Esophagus muscularis mucosa (tissue), 4 donors: ENCODE measurements at regions of chr19 and their contacts with region 1.

Region 1: DNA sequence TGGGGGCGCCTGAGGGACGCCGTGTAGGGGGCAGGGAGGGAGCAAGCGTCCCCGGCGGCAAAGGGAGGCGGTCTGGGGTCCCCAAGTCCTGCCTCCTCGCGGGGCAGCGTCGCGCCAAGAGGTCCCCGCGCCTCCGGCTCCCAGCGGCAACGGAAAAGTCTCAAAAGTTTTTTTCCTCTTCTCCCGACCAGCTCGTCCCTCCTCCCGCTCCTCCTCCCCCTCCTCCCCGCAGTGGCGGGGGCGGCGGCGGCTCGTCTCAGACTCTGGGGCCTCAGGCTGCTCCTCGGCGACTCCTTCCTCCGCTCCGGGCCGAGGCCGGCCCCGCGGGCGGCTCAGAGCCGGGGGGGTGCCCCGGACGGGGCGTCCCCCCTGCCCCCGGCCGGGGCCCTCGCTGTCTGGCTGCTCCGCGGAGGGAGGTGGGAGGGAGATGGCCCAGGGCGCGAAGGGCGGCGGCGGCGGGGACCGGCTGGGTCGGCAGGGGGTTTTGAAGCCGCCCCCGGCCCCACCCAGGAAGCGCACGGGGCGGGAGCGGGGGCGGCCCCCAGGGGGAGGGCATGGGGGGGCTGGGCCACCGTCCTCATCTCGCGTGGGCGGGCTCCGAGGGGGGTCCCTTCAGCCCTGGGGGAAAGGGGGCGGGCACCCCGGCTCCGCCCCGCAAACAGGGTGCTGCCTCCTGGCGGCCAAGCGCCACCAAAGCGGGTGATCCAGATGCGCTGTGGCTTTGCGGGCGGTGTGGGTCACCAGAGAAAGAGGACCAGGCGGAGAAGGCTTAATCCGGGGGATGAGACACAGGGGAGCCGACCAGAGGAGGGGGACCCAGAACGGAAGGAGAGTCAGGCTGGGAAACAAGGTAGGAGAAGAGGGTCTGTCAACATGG is at the start of gene TGFB1:
- DNase-seq: peak; percentile 96
- H3K4me3 ChIP-seq: peak within 1 kb of the TSS; percentile 80 to 90 (median 88)
- H3K27ac ChIP-seq: peak within 1 kb of the TSS; percentile 87 to 95 (median 93)
- H3K4me1 ChIP-seq: peaks cover 23 to 61% (median 58%) of the 10 kb centered on the region in 4 donors
- H3K27me3 ChIP-seq: peaks cover 0 to 6% (median 0%) of the 10 kb centered on the region in 4 donors
- CTCF ChIP-seq: peak; percentile 88 to 99 (median 88)
- EP300 ChIP-seq: no peak
- POLR2A ChIP-seq: peak; percentile 15
- total RNA-seq, gene TGFB1: 29.8 to 52.4 (median 31.8) TPM

Region 2: GRCh38 chr19:41318669-41319499 is 34.8 kb before region 1 on chr19:
- intact Hi-C with region 1: loop called (anchors 5 kb)
- DNase-seq: no peak
- H3K4me3 ChIP-seq: no peak overlapping the region
- H3K27ac ChIP-seq: no peak overlapping the region
- H3K4me1 ChIP-seq: peaks cover 25 to 31% (median 29%) of the 10 kb centered on the region in 4 donors
- H3K27me3 ChIP-seq: no peaks in the 10 kb centered on the region
- CTCF ChIP-seq: no peak
- EP300 ChIP-seq: no peak
- POLR2A ChIP-seq: no peak

Region 3: GRCh38 chr19:41426952-41427646 is 73.4 kb after region 1 on chr19 and contains the start of gene B3GNT8:
- intact Hi-C with region 1: loop called (anchors 5 kb)
- DNase-seq: peak; percentile 95
- H3K4me3 ChIP-seq: peak within 1 kb of the TSS; percentile 56 to 71 (median 62)
- H3K27ac ChIP-seq: peak within 1 kb of the TSS; percentile 82 to 86 (median 86)
- H3K4me1 ChIP-seq: peaks cover 47 to 54% (median 50%) of the 10 kb centered on the region in 4 donors
- H3K27me3 ChIP-seq: no peaks in the 10 kb centered on the region
- CTCF ChIP-seq: no peak
- EP300 ChIP-seq: no peak
- POLR2A ChIP-seq: no peak
- total RNA-seq, gene B3GNT8: 1.2 to 12.0 (median 5.0) TPM